Breast epithelium (tissue), 4 donors: ENCODE measurements at regions of chr7 and their contacts with region 1.

Region 1: DNA sequence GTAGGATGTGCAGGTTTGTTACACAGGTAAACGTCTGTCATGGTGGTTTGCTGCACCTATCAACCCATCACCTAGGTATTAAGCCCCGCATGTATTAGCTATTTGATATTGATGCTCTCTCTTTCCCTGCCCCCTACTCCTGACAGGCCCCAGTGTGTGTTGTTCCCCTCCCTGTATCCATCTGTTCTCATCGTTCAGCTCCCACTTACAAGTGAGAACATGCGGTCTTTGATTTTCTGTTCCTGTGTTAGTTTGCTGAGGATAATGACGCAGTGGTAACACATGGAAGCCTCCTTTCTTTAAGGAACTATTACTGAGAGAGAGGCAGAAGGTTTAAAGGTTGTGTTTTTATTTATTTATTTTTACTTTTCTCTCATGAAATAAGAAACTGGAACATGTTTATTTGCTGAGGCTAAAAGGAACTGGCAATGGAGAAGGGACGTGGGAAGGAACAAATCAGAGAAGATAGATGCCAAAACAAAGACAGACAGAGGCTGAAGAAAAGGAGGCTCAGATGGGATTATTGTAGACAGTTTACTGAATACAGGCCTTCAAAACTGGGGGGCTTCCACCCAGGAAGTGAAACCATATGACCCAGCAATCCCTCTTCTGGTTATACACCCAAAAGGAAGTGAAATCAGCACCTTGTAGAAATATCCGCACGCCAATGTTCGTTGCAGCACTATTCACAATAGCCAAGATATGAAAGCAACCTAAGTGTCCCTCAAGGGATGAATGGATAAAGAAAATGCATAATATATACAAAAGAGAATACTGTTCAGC is 556.3 kb downstream of the GRM8 start:
- DNase-seq: no peak
- H3K4me3 ChIP-seq: no peak overlapping the region
- H3K27ac ChIP-seq: no peak overlapping the region
- H3K4me1 ChIP-seq: no peaks in the 10 kb centered on the region
- H3K27me3 ChIP-seq: no peaks in the 10 kb centered on the region
- CTCF ChIP-seq: no peak
- POLR2A ChIP-seq: no peak

Region 2: DNA sequence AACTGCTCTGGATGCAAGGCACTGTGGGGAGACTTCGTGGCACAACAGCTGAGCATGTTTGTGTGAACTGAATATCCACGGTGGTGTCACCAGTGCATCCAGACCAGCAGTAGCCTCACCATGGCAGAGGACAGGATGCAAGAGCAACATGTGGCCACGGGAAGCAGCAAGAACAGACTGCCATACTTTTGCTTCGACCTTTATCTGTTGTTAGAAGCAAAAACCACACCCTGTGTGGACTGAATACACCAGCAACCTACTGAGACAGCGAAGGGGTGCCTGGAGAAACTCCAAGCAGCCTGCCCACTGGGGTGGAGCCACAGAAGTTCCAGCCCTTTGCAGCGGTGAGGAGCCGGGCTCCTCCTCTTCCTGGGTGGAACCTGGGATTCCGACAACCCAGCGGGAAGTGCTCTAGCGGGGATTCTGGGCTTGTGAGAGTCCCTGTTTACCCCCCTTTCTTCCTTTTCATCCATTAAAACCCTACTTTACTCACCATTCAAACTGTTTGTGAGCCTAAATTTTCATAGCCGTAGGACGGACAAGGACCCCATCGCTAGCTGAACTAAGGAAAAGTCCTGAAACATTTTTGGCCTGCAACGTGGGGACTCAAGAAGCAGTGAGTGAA is 28.6 kb before region 1 on chr7:
- intact Hi-C with region 1: loop called (anchors 2 kb)
- DNase-seq: no peak
- H3K4me3 ChIP-seq: no peak overlapping the region
- H3K27ac ChIP-seq: no peak overlapping the region
- H3K4me1 ChIP-seq: no peaks in the 10 kb centered on the region
- H3K27me3 ChIP-seq: no peaks in the 10 kb centered on the region
- CTCF ChIP-seq: no peak
- POLR2A ChIP-seq: no peak

Region 3: GRCh38 chr7:126750207-126750911 is 53.9 kb after region 1 on chr7:
- intact Hi-C with region 1: no loop called
- DNase-seq: no peak
- H3K4me3 ChIP-seq: no peak overlapping the region
- H3K27ac ChIP-seq: no peak overlapping the region
- H3K4me1 ChIP-seq: no peaks in the 10 kb centered on the region
- H3K27me3 ChIP-seq: no peaks in the 10 kb centered on the region
- CTCF ChIP-seq: no peak
- POLR2A ChIP-seq: no peak

Region 4: GRCh38 chr7:128155100-128155740 is 1458.8 kb after region 1 on chr7:
- intact Hi-C with region 1: no loop called
- DNase-seq: no peak
- H3K4me3 ChIP-seq: no peak overlapping the region
- H3K27ac ChIP-seq: no peak overlapping the region
- H3K4me1 ChIP-seq: no peaks in the 10 kb centered on the region
- H3K27me3 ChIP-seq: peaks cover 0 to 5% of the 10 kb centered on the region in 2 donors
- CTCF ChIP-seq: no peak
- POLR2A ChIP-seq: no peak